AG04450 (cell line): ENCODE measurements at regions of chr21 and their contacts with region 1.

Region 1: GRCh38 chr21:34817821-34818661 is 149.2 kb downstream of the CLIC6 start:
- DNase-seq: no peak
- H3K4me3 ChIP-seq: no peak overlapping the region
- H3K27ac ChIP-seq: peak overlapping the region; percentile 21
- H3K27me3 ChIP-seq: no peaks in the 10 kb centered on the region
- CTCF ChIP-seq: no peak

Region 2: DNA sequence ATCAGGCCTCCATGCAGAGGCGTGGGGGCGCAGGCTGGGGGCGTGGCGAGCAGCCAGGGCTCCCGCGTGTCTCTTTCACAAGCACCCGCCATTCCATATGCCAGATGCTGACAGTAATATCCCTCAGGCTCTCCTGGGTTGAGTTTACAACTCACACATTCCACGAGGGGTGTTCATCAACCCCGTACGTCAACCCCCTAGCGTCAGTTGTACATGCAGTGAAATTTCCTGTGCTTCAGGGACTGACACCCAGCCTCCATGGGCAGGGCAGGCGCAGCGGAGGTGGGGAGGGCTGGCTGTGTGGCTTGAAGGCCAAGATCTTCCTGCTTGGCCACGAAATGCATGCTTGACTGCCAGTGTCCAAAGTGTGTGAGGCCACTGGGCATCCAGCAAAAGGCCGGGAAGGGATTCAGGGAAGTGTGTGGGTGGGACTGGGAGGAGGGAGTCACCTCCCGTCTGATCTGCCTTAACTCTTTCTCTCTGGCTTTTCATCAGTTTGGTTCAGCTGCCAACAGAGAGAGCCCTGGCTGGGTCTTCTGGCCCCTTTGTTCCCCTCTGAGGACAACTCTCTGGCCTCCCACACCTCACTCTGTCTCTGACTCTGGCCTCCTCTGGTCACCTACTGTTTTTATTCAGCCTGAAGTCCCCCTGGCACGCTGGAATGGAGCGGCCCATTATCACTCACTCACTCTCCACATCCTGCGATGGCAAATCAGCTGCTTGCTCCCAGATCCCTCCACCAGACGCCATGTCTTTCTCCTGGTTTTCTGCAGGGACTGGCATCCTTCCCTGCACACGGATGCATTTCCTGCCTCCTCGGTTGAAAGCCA is 115.5 kb before region 1 on chr21:
- CTCF ChIA-PET with region 1: interaction called, 13 read pairs
- POLR2A ChIA-PET with region 1: no interaction called
- DNase-seq: peak; percentile 90
- H3K4me3 ChIP-seq: no peak overlapping the region
- H3K27ac ChIP-seq: peak overlapping the region; percentile 88
- H3K27me3 ChIP-seq: no peaks in the 10 kb centered on the region
- CTCF ChIP-seq: peak; percentile 25; the same call in 1 of the 2 replicates

Region 3: GRCh38 chr21:34801519-34802132 is 16.4 kb before region 1 on chr21:
- CTCF ChIA-PET with region 1: no interaction called
- POLR2A ChIA-PET with region 1: no interaction called
- DNase-seq: no peak
- H3K4me3 ChIP-seq: no peak overlapping the region
- H3K27ac ChIP-seq: no peak overlapping the region
- H3K27me3 ChIP-seq: no peaks in the 10 kb centered on the region
- CTCF ChIP-seq: peak; percentile 23; the same call in 1 of the 2 replicates